Heart right ventricle (tissue), 16 donors: ENCODE measurements at regions of chr19 and their contacts with region 1.

Region 1: GRCh38 chr19:10797541-10798256 is 38.3 kb downstream of the TMED1 start:
- DNase-seq: no peak
- ATAC-seq: peak in 3 of 8 donors; percentile 18 to 32 (median 27)
- H3K4me3 ChIP-seq: no peak overlapping the region
- H3K27ac ChIP-seq: peak overlapping the region in 1 of 10 donors; percentile 65
- H3K4me1 ChIP-seq: peaks cover 0 to 27% (median 13%) of the 10 kb centered on the region in 9 donors
- H3K27me3 ChIP-seq: no peaks in the 10 kb centered on the region
- CTCF ChIP-seq: no peak

Region 2: GRCh38 chr19:10580979-10581631 is 216.6 kb before region 1 on chr19:
- intact Hi-C with region 1: loop called in 1 of 10 experiments (anchors 10 kb)
- DNase-seq: peak; percentile 84 to 88
- ATAC-seq: peak; percentile 74 to 93 (median 86)
- H3K4me3 ChIP-seq: peak overlapping the region in 4 of 10 donors; percentile 11 to 26 (median 18)
- H3K27ac ChIP-seq: no peak overlapping the region
- H3K4me1 ChIP-seq: peaks cover 0 to 13% (median 0%) of the 10 kb centered on the region in 9 donors
- H3K27me3 ChIP-seq: peaks cover 0 to 5% (median 0%) of the 10 kb centered on the region in 7 donors
- CTCF ChIP-seq: peak; percentile 97 to 100 (median 98)

Region 3: DNA sequence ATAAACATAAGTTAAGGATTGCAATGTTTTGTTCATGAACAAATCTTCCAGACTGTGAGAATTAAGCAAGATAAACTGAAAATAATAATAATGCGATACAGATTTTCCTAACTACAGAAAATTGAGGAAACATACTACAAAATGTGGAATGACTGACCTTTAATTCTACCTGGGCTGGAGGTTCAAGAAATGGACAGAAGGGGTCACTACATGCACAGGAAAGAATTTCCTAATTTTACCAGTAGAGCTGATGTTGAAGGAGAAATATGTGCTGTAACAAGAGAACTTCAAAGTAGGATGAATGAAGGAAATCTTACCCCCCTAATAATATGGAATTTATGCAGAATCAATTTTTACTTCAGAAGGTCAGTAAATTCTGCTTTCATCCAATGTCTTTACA is 861.9 kb after region 1 on chr19:
- intact Hi-C with region 1: loop called in 1 of 10 experiments (anchors 5 kb)
- DNase-seq: no peak
- ATAC-seq: no peak
- H3K4me3 ChIP-seq: no peak overlapping the region
- H3K27ac ChIP-seq: no peak overlapping the region
- H3K4me1 ChIP-seq: no peaks in the 10 kb centered on the region
- H3K27me3 ChIP-seq: no peaks in the 10 kb centered on the region
- CTCF ChIP-seq: peak in 7 of 9 donors; percentile 12 to 38 (median 24)